Heart right ventricle (tissue), 16 donors: ENCODE measurements at regions of chr9 and their contacts with region 1.

Region 1: GRCh38 chr9:124537926-124538325 is 30.7 kb upstream of the NR5A1 start:
- DNase-seq: no peak
- ATAC-seq: no peak
- H3K4me3 ChIP-seq: no peak overlapping the region
- H3K27ac ChIP-seq: no peak overlapping the region
- H3K4me1 ChIP-seq: no peaks in the 10 kb centered on the region
- H3K27me3 ChIP-seq: no peaks in the 10 kb centered on the region
- CTCF ChIP-seq: no peak

Region 2: DNA sequence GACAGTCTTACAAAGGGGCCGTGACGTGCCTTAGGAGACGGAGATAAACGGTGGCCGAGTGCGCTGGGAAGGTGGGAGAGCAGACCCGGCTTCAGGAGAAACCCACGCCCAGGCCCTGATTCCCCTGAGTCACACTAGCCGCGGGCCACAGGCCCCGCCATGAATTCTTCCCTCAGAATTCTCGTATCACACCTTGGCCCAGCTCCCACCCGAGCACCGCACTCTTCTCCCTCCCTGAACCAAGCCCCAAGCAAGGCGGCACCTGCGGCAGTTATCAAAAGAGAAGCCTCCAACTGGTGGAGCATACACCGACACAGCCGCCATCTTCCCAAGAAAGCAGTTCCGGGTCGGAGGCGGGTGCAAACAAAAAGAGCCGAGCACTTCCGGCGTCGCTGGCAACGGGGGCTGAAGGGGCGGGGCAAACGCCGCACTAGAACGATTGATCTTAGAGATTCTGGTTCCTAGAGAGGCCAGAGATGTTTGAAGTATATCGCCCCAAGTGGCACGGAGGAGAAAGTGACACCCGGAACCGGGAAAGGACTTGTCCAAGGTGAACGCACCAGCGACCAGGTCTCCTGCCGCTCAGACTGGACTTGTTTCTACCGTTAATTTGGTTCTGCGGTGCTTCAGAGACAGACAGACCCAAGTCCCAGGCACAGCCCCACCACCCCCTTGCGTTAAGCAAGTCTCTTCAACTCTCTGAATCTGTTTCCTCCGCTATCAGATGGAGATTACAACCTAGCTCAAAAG is 122.6 kb before region 1 on chr9 and contains the start of gene PSMB7:
- intact Hi-C with region 1: loop called (anchors 1 to 5 kb)
- DNase-seq: peak; percentile 96
- ATAC-seq: peak; percentile 92 to 97 (median 96)
- H3K4me3 ChIP-seq: peak within 1 kb of the TSS; percentile 77 to 99 (median 88)
- H3K27ac ChIP-seq: peak within 1 kb of the TSS in 8 of 10 donors; percentile 25 to 85 (median 58)
- H3K4me1 ChIP-seq: peaks cover 0 to 30% (median 15%) of the 10 kb centered on the region in 9 donors
- H3K27me3 ChIP-seq: no peaks in the 10 kb centered on the region
- CTCF ChIP-seq: peak; percentile 72 to 94 (median 87)
- total RNA-seq, gene PSMB7: 148 to 182 (median 162) TPM

Region 3: GRCh38 chr9:124420991-124421543 is 116.9 kb before region 1 on chr9:
- intact Hi-C with region 1: loop called (anchors 1 to 5 kb)
- DNase-seq: no peak
- ATAC-seq: peak in 2 of 8 donors; percentile 8 to 37
- H3K4me3 ChIP-seq: no peak overlapping the region
- H3K27ac ChIP-seq: no peak overlapping the region
- H3K4me1 ChIP-seq: no peaks in the 10 kb centered on the region
- H3K27me3 ChIP-seq: peaks cover 0 to 8% (median 3%) of the 10 kb centered on the region in 7 donors
- CTCF ChIP-seq: no peak